ENCODE measurements at regions of chr17 and their contacts with region 1.

Region 1: GRCh38 chr17:81401723-81402529 is 6.7 kb downstream of the BAHCC1 start:
- DNase-seq: no peak
- ATAC-seq: no peak
- H3K4me3 ChIP-seq: no peak overlapping the region
- H3K27ac ChIP-seq: peak overlapping the region; percentile 60 to 87
- H3K4me1 ChIP-seq: peaks cover 0 to 4% of the 10 kb centered on the region in 2 donors
- H3K27me3 ChIP-seq: no peaks in the 10 kb centered on the region

Region 2: GRCh38 chr17:81417049-81417878 is 15.3 kb after region 1 on chr17:
- intact Hi-C with region 1: loop called in 1 of 2 experiments (anchors 1 kb)
- DNase-seq: peak; percentile 92 to 94
- ATAC-seq: peak; percentile 20
- H3K4me3 ChIP-seq: no peak overlapping the region
- H3K27ac ChIP-seq: peak overlapping the region; percentile 19 to 96
- H3K4me1 ChIP-seq: no peaks in the 10 kb centered on the region
- H3K27me3 ChIP-seq: no peaks in the 10 kb centered on the region

Region 3: DNA sequence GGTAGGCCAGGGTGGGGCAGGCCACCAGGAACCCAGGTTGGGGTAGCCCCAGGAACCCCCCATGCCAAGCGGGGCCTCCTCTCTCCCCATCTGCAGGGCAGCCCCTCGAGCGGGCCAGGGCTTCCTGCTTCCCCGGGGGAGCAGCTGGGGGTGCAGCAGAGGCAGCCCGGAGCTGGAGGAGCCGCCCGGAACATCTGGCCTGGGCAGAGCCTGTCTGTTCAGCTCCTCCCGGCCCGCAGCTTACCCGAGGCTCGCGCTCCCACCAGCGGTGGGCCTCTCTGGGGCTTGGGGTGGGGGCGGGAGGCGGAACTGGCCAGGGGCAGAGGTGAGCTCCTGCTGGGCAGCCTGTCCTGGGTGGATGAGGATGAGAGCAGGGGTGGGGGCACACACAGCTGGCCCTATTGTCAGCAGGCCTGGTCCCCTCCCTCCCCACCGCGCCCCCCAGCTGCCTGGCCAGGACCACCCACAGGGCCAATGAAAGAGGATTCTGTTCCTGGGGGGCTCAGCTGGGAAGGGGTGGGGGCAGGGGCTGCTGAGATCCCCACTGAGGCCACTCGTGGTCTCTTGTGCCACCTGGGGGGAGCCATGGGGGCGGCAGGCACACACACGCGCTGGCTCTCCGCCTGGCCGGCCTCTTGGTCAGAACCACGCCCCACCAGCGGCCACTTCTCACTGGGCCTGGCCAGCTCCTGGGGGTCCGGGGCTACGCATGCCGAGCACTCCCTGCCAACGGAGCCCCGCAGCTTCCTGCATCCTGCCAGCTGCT is 28.0 kb after region 1 on chr17:
- intact Hi-C with region 1: no loop called
- DNase-seq: no peak
- ATAC-seq: peak; percentile 40
- H3K4me3 ChIP-seq: no peak overlapping the region
- H3K27ac ChIP-seq: no peak overlapping the region
- H3K4me1 ChIP-seq: no peaks in the 10 kb centered on the region
- H3K27me3 ChIP-seq: no peaks in the 10 kb centered on the region

Region 4: DNA sequence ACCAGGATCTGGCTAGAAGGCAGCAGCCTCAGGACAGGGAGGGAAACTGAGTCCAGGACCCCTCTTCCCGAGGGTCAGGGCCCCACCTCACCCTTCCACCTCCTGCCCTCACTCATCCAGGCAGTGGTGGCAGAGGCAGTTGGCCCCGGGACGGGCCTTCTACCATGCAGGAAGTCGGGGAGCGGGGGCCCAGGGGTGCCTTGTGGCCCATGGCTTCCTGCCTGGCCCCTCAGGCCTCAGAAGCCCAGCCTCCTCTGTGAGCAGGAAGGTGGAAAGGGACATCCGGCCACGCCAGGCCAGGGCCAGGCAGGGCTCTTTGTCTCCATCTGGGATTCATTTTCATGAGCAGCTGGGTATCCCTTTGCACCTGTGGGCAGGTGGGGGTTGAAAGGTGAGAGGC is 51.8 kb after region 1 on chr17:
- intact Hi-C with region 1: no loop called
- DNase-seq: no peak
- ATAC-seq: no peak
- H3K4me3 ChIP-seq: no peak overlapping the region
- H3K27ac ChIP-seq: no peak overlapping the region
- H3K4me1 ChIP-seq: no peaks in the 10 kb centered on the region
- H3K27me3 ChIP-seq: no peaks in the 10 kb centered on the region

Region 5: DNA sequence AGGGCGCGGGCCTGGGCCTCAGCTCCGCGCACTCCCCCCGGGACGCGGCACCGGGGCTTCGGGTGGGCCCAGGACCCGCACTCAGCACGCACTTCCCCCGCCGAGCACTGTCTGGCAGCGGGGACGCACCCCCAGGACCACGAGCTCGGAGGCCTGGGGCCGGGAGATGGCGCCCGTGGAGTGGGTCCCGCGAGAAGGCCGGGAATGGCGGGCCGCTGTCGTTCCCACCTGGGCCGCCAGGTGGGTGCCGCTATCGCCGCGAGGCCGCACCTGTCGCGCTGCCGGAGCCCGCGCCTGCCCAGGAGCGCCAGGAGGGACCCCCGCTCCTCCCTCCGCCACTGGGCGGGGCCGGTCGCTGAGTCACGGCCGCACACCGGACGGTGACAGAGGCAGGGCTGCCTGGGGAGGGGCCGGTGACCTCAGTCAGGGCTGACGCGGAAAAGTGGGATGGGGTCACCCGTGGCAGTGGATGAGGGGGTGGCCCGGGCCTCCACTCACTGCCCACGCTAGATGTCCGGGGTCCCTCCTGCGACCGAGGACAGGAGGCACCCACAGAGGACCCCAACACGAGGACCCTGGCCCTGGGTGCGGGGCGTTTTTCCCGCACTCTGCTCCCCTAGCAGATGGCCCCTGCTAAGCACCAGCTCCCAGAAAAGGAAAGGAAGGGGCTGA is 117.5 kb after region 1 on chr17:
- intact Hi-C with region 1: no loop called
- DNase-seq: peak in 1 of 2 donors; percentile 89
- ATAC-seq: no peak
- H3K4me3 ChIP-seq: peak overlapping the region; percentile 11 to 37
- H3K27ac ChIP-seq: no peak overlapping the region
- H3K4me1 ChIP-seq: peaks cover 0 to 1% of the 10 kb centered on the region in 2 donors
- H3K27me3 ChIP-seq: no peaks in the 10 kb centered on the region

Region 6: GRCh38 chr17:81821603-81822311 is 419.8 kb after region 1 on chr17:
- intact Hi-C with region 1: no loop called
- DNase-seq: peak; percentile 88 to 93
- ATAC-seq: peak; percentile 74
- H3K4me3 ChIP-seq: no peak overlapping the region
- H3K27ac ChIP-seq: peak overlapping the region in 1 of 2 donors; percentile 11
- H3K4me1 ChIP-seq: no peaks in the 10 kb centered on the region
- H3K27me3 ChIP-seq: no peaks in the 10 kb centered on the region